Endothelial cell of umbilical vein (primary cell): ENCODE measurements at regions of chr3 and their contacts with region 1.

Region 1: GRCh38 chr3:27357665-27358258 is 11.4 kb downstream of the NEK10 start:
- DNase-seq: peak; percentile 80
- H3K4me3 ChIP-seq: no peak overlapping the region
- H3K27ac ChIP-seq: no peak overlapping the region
- H3K4me1 ChIP-seq: peaks cover 45% of the 10 kb centered on the region
- H3K27me3 ChIP-seq: no peaks in the 10 kb centered on the region
- CTCF ChIP-seq: peak; percentile 73 to 79
- POLR2A ChIP-seq: no peak

Region 2: GRCh38 chr3:26668171-26668570 is 689.6 kb before region 1 on chr3:
- CTCF ChIA-PET with region 1: no interaction called
- POLR2A ChIA-PET with region 1: no interaction called
- dilution Hi-C with region 1: no loop called
- intact Hi-C with region 1: no loop called
- DNase-seq: no peak
- H3K4me3 ChIP-seq: no peak overlapping the region
- H3K27ac ChIP-seq: no peak overlapping the region
- H3K4me1 ChIP-seq: no peaks in the 10 kb centered on the region
- H3K27me3 ChIP-seq: no peaks in the 10 kb centered on the region
- CTCF ChIP-seq: no peak
- POLR2A ChIP-seq: no peak

Region 3: GRCh38 chr3:27134165-27134796 is 223.5 kb before region 1 on chr3:
- CTCF ChIA-PET with region 1: interaction called, 8 read pairs
- POLR2A ChIA-PET with region 1: no interaction called
- dilution Hi-C with region 1: no loop called
- intact Hi-C with region 1: loop called (anchors 1 kb)
- DNase-seq: peak; percentile 72
- H3K4me3 ChIP-seq: no peak overlapping the region
- H3K27ac ChIP-seq: no peak overlapping the region
- H3K4me1 ChIP-seq: no peaks in the 10 kb centered on the region
- H3K27me3 ChIP-seq: no peaks in the 10 kb centered on the region
- CTCF ChIP-seq: peak; percentile 83 to 85
- POLR2A ChIP-seq: no peak

Region 4: GRCh38 chr3:27326629-27327545 is 30.9 kb before region 1 on chr3:
- CTCF ChIA-PET with region 1: interaction called, 10 read pairs
- POLR2A ChIA-PET with region 1: no interaction called
- dilution Hi-C with region 1: no loop called
- intact Hi-C with region 1: no loop called
- DNase-seq: peak; percentile 56
- H3K4me3 ChIP-seq: no peak overlapping the region
- H3K27ac ChIP-seq: peak overlapping the region; percentile 43
- H3K4me1 ChIP-seq: peaks cover 14% of the 10 kb centered on the region
- H3K27me3 ChIP-seq: no peaks in the 10 kb centered on the region
- CTCF ChIP-seq: no peak
- POLR2A ChIP-seq: no peak

Region 5: DNA sequence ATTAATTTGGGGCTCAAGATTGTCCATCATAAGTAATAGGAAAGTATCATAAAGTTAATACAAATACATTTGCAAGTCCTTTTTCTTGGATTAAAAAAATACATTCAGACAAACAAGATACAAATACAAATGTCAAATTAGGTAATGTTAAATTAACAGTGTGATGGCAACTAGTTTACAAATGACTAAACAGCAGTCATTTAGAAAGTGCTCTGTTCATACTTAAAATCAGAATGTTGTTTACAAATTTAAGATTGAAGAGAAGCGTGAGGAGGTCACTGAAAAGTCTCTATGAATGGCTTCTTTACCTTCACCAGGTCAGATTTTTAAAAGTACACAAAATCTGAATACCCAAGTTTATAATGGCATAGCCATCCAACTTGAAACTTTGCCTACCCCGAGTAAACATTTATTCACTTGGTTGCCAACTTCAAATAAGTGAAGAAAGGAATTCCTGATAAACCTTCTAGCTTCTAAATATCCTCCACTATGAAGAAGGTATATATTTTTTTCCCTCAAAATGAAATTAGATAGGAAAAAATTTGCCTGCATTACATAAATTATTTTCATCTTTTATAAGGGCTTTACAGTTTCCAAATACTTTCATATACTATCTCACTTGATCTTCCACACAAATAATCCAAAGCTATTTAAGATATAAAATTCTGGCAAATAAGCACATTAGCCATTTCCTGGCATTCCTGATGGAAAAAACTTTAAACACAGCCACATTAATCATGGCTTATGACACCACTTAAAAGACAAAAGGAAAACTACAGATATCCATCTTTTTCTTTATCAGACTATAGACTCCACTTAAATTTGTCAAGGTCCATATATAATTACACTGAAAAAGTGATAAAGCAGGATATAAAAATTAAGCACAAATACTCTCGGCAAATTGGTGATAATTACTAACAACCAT is 22.9 kb after region 1 on chr3:
- CTCF ChIA-PET with region 1: interaction called, 15 read pairs
- POLR2A ChIA-PET with region 1: no interaction called
- dilution Hi-C with region 1: no loop called
- intact Hi-C with region 1: loop called (anchors 2 kb)
- DNase-seq: peak; percentile 74
- H3K4me3 ChIP-seq: no peak overlapping the region
- H3K27ac ChIP-seq: no peak overlapping the region
- H3K4me1 ChIP-seq: peaks cover 7% of the 10 kb centered on the region
- H3K27me3 ChIP-seq: no peaks in the 10 kb centered on the region
- CTCF ChIP-seq: no peak
- POLR2A ChIP-seq: no peak

Region 6: GRCh38 chr3:27467545-27467944 is 109.8 kb after region 1 on chr3:
- CTCF ChIA-PET with region 1: interaction called, 10 read pairs
- POLR2A ChIA-PET with region 1: no interaction called
- dilution Hi-C with region 1: no loop called
- intact Hi-C with region 1: loop called (anchors 1 kb)
- DNase-seq: peak; percentile 70
- H3K4me3 ChIP-seq: no peak overlapping the region
- H3K27ac ChIP-seq: no peak overlapping the region
- H3K4me1 ChIP-seq: peaks cover 8% of the 10 kb centered on the region
- H3K27me3 ChIP-seq: no peaks in the 10 kb centered on the region
- CTCF ChIP-seq: peak; percentile 36 to 40
- POLR2A ChIP-seq: no peak

Region 7: GRCh38 chr3:27559835-27560234 is 202.1 kb after region 1 on chr3:
- CTCF ChIA-PET with region 1: no interaction called
- POLR2A ChIA-PET with region 1: no interaction called
- dilution Hi-C with region 1: no loop called
- intact Hi-C with region 1: loop called (anchors 1 kb)
- DNase-seq: peak; percentile 99
- H3K4me3 ChIP-seq: no peak overlapping the region
- H3K27ac ChIP-seq: peak overlapping the region; percentile 85
- H3K4me1 ChIP-seq: peaks cover 18% of the 10 kb centered on the region
- H3K27me3 ChIP-seq: no peaks in the 10 kb centered on the region
- CTCF ChIP-seq: no peak
- POLR2A ChIP-seq: peak; percentile 27

Region 8: DNA sequence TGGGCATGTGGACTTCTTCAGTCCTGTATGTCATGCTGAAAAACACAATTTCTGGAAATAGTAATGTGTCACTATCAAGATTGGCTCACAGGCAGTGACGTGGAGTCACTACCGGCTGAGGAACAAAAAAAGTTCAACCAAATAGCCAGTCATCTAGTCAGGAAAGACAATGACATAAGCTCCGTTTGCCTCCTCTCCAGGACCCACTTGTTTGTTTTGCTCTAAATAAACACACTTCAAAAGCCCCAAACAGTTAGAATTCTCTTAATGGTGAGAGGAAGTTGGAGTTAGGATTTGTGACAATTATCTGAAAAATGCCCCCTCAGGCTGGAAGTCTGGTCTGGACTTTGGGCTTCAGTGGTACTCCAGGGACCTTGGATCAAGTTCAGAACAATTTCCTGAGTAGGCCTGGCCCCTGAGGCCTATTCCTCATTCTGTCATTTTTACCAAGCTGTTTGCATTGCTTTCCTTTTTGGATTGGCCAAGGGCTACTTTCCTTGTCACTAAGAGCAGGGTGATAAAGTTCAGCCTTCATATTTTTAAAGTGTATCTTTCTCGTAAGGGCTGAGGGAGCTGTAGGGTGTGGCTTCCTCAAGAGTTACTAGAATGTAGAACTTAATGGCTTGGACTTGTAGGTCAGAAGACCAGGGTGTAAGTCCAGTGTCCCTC is 265.5 kb after region 1 on chr3:
- CTCF ChIA-PET with region 1: no interaction called
- POLR2A ChIA-PET with region 1: no interaction called
- dilution Hi-C with region 1: no loop called
- intact Hi-C with region 1: no loop called
- DNase-seq: peak; percentile 74
- H3K4me3 ChIP-seq: no peak overlapping the region
- H3K27ac ChIP-seq: peak overlapping the region; percentile 94
- H3K4me1 ChIP-seq: peaks cover 40% of the 10 kb centered on the region
- H3K27me3 ChIP-seq: no peaks in the 10 kb centered on the region
- CTCF ChIP-seq: no peak
- POLR2A ChIP-seq: no peak

Region 9: GRCh38 chr3:27666708-27667107 is 308.9 kb after region 1 on chr3:
- CTCF ChIA-PET with region 1: no interaction called
- POLR2A ChIA-PET with region 1: no interaction called
- dilution Hi-C with region 1: no loop called
- intact Hi-C with region 1: no loop called
- DNase-seq: no peak
- H3K4me3 ChIP-seq: no peak overlapping the region
- H3K27ac ChIP-seq: no peak overlapping the region
- H3K4me1 ChIP-seq: no peaks in the 10 kb centered on the region
- H3K27me3 ChIP-seq: no peaks in the 10 kb centered on the region
- CTCF ChIP-seq: no peak
- POLR2A ChIP-seq: no peak